ENCODE measurements at regions of chr11 and their contacts with region 1.

Region 1: DNA sequence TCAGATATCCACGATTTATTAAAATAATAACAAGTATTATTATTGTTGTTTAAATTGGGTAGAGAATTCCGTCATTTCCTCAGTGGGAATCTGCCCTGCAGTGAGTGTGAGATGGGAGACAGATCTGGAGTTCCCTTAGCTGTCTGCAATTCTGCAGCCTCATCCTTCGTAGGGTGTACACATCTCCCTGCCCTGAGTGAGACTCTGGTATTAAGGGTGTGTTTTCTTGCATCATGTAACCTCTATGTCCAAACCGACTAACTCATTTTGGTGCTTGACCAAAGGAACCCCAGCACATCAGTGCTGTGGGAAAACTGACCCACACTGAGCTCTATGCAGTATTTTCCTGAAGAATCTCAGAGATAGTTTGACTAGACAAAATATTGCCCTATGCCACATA is 157.6 kb downstream of the LDLRAD3 start:
- DNase-seq: no peak

Region 2: DNA sequence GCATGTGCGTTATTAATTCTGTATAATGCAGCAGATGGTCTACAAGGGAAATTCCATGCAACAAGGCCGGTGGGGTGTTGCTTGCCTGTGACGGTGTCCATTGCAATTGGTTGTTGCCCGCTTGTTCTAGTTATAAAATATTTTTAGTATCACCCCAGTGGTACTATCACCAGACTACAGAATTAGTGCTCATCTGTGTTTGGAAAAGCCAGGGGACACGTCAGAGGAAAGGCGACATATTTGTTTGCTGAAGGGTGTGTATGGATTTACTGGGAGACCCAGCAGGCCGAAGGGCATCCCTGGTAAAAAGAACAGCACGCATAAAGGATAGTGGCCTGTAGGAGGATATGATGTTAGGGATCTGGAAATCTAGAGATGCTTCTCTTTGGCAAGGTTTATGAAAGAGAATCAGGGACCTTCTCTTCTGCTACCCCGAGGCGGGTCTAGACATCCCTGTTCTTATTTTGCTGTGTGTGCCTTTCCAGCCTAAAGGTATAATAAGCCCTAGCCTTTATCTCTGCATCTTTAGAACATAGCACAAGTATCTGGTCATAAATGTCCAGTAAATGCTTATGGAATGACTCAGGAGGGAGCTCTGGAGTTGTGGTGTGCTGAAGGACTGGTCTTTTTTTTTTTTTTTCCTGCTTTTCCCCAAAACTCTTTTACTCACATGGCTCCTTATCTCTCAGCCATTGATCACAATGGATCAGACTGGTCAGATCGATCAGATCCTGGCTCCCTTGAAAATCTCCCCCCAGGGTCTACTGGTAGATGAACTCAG is 66.7 kb before region 1 on chr11:
- intact Hi-C with region 1: loop called in 1 of 2 experiments (anchors 2 kb)
- DNase-seq: no peak

Region 3: DNA sequence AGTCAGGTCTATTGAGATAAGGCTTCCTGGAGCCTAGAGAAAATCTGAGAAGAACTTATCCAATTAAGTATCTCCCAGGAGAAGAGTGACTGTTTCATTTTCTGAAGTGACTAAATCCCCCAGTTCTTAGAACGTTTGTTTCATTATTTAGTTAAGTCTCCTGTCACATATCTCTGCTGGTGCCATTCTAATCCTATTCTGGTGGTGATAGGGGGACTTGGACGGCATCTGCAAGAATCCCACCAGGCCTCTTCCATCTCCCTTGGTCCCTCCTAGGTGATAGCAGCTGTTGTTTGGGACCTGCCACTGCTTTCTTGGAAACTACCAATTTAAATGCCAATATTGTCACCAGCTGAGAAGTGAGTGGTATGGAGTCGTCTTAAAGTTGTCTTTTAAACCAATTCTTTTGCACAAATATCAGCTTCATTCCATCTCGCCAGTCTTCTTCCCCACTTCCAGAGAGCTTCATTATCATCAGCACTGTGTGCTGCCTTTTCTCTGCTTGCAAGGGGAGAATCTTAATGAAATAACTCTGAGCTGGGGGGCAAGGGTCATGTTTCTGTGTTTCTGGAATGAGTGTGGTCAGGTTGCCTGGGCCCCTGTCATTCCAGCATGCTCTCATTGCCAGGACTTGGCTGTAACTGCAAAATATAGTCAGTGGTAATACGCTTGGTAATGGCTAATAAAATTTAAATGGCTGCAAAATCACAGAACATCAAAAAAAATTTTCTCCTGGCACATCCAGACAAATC is 52.8 kb before region 1 on chr11:
- intact Hi-C with region 1: no loop called
- DNase-seq: no peak